Aorta (tissue), 5 donors: ENCODE measurements at regions of chr2 and their contacts with region 1.

Region 1: DNA sequence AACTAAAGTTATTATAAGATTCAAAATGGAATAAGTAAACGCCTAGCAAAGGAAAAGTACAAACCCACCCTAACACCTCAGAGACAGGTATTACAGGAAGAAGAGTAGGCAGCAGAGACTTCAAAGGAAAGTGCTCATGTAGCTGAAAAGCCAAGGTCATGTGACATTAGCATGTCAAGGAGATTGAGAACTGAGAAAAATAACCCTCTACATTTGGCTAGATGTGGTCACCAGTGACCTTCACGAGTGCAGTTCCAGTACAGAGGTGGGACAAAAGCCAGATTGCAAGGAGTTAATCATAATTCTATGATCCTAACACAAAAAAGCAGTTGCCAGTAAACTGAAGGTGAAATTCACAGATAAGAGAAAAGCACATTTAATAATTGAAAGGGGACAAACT is 252.7 kb downstream of the ZEB2 start:
- DNase-seq: no peak
- ATAC-seq: no peak
- H3K4me3 ChIP-seq: no peak overlapping the region
- H3K27ac ChIP-seq: no peak overlapping the region
- H3K4me1 ChIP-seq: no peaks in the 10 kb centered on the region
- H3K27me3 ChIP-seq: no peaks in the 10 kb centered on the region

Region 2: GRCh38 chr2:144230448-144231085 is 36.7 kb before region 1 on chr2:
- intact Hi-C with region 1: no loop called
- DNase-seq: no peak
- ATAC-seq: no peak
- H3K4me3 ChIP-seq: no peak overlapping the region
- H3K27ac ChIP-seq: no peak overlapping the region
- H3K4me1 ChIP-seq: peaks cover 0 to 2% of the 10 kb centered on the region in 2 donors
- H3K27me3 ChIP-seq: no peaks in the 10 kb centered on the region

Region 3: GRCh38 chr2:144244938-144245337 is 22.3 kb before region 1 on chr2:
- intact Hi-C with region 1: loop called in 1 of 2 experiments (anchors 2 kb)
- DNase-seq: no peak
- ATAC-seq: no peak
- H3K4me3 ChIP-seq: no peak overlapping the region
- H3K27ac ChIP-seq: no peak overlapping the region
- H3K4me1 ChIP-seq: no peaks in the 10 kb centered on the region
- H3K27me3 ChIP-seq: no peaks in the 10 kb centered on the region